ENCODE measurements at regions of chr14 and their contacts with region 1.

Region 1: DNA sequence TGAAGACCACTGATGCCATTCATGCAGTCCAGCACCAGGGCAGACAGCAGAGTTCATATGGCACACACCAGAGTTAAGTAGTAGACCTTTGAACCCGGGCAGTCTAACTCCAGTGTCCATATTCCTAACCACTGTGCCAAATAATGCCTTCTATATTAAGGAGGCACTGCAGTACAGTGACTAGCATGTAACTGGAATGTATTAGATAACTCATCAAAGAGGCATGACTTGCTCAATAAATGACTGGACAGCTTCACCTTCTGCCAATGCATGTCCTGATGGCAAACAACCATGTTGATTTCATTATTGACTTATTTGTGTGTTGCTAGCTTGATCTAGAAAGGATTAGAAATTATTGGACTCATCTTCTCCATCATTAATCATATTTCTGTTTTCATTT is 40.2 kb downstream of the DACT1 start:
- DNase-seq: no peak
- H3K4me3 ChIP-seq: no peak overlapping the region
- H3K27ac ChIP-seq: no peak overlapping the region
- H3K4me1 ChIP-seq: no peaks in the 10 kb centered on the region
- H3K27me3 ChIP-seq: peaks cover 8% of the 10 kb centered on the region
- CTCF ChIP-seq: no peak

Region 2: DNA sequence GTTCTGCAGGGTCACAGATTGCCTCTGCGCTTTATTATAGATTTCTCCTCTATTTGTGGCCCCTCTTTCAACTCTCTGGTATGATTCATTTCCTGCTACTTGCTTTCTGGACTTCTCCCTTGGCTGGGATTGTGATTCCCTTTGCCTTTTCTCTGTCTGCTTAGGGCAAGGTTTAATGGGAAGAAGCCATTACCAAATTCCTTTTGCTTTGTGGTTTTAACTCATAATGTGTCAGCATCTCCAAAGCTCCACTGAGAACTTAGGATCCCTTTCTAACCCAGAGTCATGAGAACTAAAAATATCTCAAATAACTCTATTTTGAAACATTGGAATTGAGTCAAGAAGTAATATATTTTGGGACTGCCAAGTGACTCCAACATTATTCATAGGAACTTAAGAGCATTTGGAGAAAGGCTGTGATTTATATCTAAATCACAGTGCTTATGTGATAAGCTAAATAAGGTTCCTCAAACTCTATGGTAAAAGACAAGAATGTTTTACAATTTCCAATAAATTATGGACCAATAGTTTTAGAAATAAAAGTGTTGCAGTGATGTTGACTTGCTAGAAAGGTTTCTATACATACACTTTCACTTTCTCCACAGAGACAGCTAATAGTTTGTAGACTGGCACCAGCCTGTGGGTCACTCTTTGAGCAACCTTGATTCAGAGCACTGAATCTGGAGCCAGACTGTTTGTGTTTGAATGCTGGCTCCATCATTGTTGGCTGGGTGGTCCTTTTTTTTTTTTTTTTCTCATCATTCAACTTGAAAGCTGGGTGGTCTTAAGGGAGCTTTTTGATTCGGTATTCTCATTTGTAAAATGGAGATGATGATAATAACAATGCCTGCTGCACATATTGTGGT is 53.7 kb after region 1 on chr14:
- CTCF ChIA-PET with region 1: no interaction called
- POLR2A ChIA-PET with region 1: interaction called, 12 read pairs
- intact Hi-C with region 1: no loop called
- DNase-seq: peak; percentile 75
- H3K4me3 ChIP-seq: no peak overlapping the region
- H3K27ac ChIP-seq: no peak overlapping the region
- H3K4me1 ChIP-seq: no peaks in the 10 kb centered on the region
- H3K27me3 ChIP-seq: no peaks in the 10 kb centered on the region
- CTCF ChIP-seq: no peak